Common myeloid progenitor, CD34-positive (primary cell): ENCODE measurements at regions of chr6 and their contacts with region 1.

Region 1: DNA sequence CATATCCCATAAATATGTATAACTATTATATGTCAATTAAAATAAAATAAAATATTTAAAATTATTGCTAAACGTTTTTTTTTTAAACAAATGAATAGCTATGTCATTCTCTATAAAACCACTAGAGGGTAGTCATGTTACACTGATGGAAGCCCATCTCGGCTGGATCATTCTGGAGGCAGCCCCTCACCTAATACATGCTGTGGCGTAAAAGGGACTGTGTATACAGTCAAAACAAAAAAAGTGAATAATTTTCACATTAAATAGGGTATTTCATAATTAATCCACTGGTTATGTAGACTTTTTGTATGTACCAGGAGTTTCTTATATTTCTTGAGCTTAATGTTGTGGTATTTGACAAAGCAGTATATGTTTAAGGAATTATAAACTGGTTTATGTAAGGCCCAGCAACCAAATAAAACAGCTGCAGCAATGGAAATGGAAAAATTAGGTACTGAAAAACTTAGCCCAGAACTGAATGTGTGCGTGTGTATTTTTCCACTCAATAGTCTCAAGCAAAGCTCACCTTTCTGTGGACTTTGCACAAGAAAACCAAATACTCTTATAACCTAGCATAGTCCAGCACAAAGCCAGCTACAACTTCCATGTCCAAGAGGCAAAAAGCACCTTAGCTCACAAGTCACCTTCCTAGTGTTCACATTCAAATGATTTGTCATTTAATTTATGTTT is 81.7 kb downstream of the COL9A1 start:
- DNase-seq: peak; percentile 43 to 65 (median 61)
- H3K4me3 ChIP-seq: no peak overlapping the region
- H3K27ac ChIP-seq: no peak overlapping the region
- H3K4me1 ChIP-seq: no peaks in the 10 kb centered on the region
- H3K27me3 ChIP-seq: peaks cover 0 to 6% (median 2%) of the 10 kb centered on the region in 5 experiments

Region 2: DNA sequence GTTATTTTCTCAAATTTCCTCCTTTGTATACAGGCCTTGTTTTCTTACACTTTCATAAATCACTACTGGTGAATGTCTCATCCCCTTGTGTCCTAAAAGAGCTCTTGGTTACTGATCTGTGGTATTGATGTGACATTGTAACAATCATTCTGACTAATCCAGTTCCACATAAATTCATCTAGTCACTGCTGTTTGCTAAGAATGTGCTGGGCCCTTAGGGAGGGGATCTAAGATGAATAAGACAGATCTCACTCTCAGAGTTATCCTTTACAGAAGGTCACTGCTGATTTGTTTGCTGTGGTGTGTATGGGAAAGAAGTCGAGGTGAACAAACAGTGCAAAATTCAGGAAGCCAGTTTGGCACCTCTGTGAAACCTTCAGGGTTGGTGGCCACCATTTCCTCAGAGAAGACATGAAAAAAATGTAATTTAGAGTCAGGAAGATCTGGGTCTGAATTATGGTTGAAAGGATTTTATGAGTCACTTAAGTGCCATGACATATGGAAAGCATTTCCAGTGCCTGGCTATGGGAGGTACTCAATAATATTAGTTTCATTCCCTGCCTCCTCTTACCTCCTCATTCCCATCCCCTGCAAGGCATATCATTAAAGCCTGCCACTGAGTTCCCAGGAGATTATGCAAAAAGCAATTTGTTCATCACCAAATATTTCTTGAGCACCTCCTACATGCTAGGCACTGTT is 40.1 kb before region 1 on chr6:
- CTCF ChIA-PET with region 1: no interaction called
- POLR2A ChIA-PET with region 1: no interaction called
- DNase-seq: no peak
- H3K4me3 ChIP-seq: no peak overlapping the region
- H3K27ac ChIP-seq: no peak overlapping the region
- H3K4me1 ChIP-seq: no peaks in the 10 kb centered on the region
- H3K27me3 ChIP-seq: peaks cover 0 to 1% (median 0%) of the 10 kb centered on the region in 5 experiments

Region 3: GRCh38 chr6:70210462-70210861 is 10.7 kb before region 1 on chr6:
- CTCF ChIA-PET with region 1: interaction called, 10 read pairs
- POLR2A ChIA-PET with region 1: no interaction called
- DNase-seq: peak in 2 of 3 donors; percentile 14 to 17
- H3K4me3 ChIP-seq: no peak overlapping the region
- H3K27ac ChIP-seq: no peak overlapping the region
- H3K4me1 ChIP-seq: no peaks in the 10 kb centered on the region
- H3K27me3 ChIP-seq: peaks cover 0 to 6% (median 2%) of the 10 kb centered on the region in 5 experiments

Region 4: GRCh38 chr6:70231311-70231710 is 10.1 kb after region 1 on chr6:
- CTCF ChIA-PET with region 1: interaction called, 34 read pairs
- POLR2A ChIA-PET with region 1: no interaction called
- DNase-seq: no peak
- H3K4me3 ChIP-seq: no peak overlapping the region
- H3K27ac ChIP-seq: no peak overlapping the region
- H3K4me1 ChIP-seq: no peaks in the 10 kb centered on the region
- H3K27me3 ChIP-seq: no peaks in the 10 kb centered on the region

Region 5: DNA sequence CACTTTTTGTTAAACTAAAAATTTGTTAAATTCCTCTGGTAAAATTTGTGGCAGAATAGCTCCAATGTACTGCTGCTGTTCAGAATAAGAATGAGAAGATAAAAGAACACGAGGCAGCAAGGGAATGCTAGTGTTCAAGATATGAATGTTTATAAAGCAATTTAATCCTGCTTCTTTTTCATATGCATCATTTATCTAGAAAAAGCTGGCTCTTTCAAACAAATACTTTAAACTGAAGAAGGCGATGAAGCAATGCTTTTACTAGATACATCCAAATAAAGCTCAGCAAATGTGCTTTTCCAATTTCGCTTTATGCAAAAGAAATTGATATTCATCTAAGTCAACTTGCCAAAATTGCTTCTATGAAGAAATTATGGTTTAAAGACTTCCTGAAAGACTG is 15.2 kb after region 1 on chr6:
- CTCF ChIA-PET with region 1: interaction called, 34 read pairs
- POLR2A ChIA-PET with region 1: no interaction called
- DNase-seq: no peak
- H3K4me3 ChIP-seq: no peak overlapping the region
- H3K27ac ChIP-seq: no peak overlapping the region
- H3K4me1 ChIP-seq: no peaks in the 10 kb centered on the region
- H3K27me3 ChIP-seq: peaks cover 0 to 1% (median 0%) of the 10 kb centered on the region in 5 experiments

Region 6: DNA sequence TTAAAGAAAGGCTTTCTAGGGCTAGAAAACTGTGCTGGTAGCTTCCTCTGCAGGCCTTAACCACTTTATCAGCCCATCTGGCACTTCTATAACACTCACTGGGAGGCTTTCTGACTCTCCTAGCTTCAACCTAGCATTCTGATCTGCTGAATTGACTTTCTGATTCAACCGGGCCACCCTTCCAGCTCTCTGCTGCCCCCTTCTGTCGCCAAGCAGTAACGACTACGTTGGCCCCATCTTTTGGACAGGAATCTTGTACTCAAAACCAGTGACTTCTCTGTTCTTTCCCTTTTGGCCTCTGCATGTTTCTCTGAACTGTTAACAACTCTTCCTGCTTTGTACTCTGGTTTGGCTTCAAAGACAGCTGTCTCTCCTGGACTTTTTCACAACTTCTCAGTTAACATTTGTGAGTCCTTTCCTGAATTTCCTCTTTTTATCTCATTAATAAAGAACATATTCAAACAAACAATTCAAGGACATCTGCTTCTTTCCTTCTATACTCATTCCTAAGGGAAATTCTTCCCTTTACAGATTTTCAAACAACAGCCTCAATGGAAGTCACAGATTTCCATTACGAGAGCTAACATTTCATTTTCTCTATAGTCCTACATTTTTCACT is 148.3 kb after region 1 on chr6:
- CTCF ChIA-PET with region 1: interaction called, 16 read pairs
- POLR2A ChIA-PET with region 1: no interaction called
- DNase-seq: peak; percentile 61 to 84 (median 77)
- H3K4me3 ChIP-seq: no peak overlapping the region
- H3K27ac ChIP-seq: no peak overlapping the region
- H3K4me1 ChIP-seq: no peaks in the 10 kb centered on the region
- H3K27me3 ChIP-seq: peaks cover 0 to 8% (median 2%) of the 10 kb centered on the region in 5 experiments